Dendritic cell treated with granulocyte-macrophage colony-stimulating factor and Interleukin-4, amounts not matched to agents 40 ng/mL and 50 ng/mL, for 4 days (primary cell): ENCODE measurements at regions of chr7 and their contacts with region 1.

Region 1: GRCh38 chr7:155506854-155507337 is 39.5 kb downstream of the CNPY1 start:
- H3K4me3 Mint-ChIP-seq: no peak overlapping the region
- H3K27ac Mint-ChIP-seq: no peak overlapping the region
- H3K4me1 Mint-ChIP-seq: peaks cover 13% of the 10 kb centered on the region
- H3K27me3 Mint-ChIP-seq: peaks cover 84% of the 10 kb centered on the region

Region 2: GRCh38 chr7:155463114-155463811 is 43.6 kb before region 1 on chr7:
- intact Hi-C with region 1: loop called (anchors 5 kb)
- H3K4me3 Mint-ChIP-seq: no peak overlapping the region
- H3K27ac Mint-ChIP-seq: no peak overlapping the region
- H3K4me1 Mint-ChIP-seq: peaks cover 18% of the 10 kb centered on the region
- H3K27me3 Mint-ChIP-seq: peaks cover 89% of the 10 kb centered on the region